ENCODE measurements at regions of chr11 and their contacts with region 1.

Region 1: DNA sequence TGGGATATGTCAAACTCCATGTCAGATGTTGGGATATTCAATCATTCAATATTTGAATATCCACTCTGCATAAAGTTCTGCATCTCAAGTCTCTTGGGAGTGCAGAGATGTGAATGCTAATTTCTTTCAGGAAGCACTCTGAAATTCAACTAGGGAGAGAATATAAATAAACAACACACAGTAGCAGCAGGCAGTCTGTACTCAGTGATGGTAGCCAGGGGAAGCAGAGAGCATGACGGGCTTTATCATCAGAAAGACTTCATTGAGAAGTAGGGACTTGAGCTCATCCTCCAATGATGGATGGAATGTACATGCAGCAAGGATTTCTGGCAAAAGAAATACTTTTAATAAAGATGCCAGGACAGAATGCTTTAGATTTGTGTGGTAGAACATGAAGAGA is 9.8 kb upstream of the TEAD1 start:
- DNase-seq: no peak
- H3K4me3 ChIP-seq: no peak overlapping the region
- H3K4me3 Mint-ChIP-seq: no peak overlapping the region
- H3K27ac Mint-ChIP-seq: no peak overlapping the region
- H3K4me1 ChIP-seq: no peaks in the 10 kb centered on the region
- H3K4me1 Mint-ChIP-seq: no peaks in the 10 kb centered on the region
- H3K27me3 ChIP-seq: no peaks in the 10 kb centered on the region
- H3K27me3 Mint-ChIP-seq: peaks cover 8% of the 10 kb centered on the region
- CTCF ChIP-seq: no peak

Region 2: DNA sequence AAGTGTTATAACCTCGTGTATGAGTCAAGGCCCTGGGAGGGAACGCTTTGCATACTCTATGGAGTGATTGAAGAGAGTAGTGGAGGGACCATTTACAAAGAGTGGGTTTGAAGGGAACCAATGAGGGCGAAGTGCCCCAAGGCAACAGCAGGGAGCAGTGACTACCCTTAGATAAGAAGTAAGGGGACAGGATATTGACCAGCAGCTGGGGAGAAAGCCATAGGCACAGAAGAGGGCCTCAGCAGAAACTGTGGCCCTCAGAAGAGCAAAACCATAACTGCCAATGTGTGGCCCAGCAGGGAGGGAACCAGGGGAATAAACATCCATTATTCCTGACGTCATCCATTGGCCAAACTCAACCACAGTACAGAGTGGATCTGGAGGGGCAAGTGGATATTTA is 262.4 kb before region 1 on chr11:
- CTCF ChIA-PET with region 1: interaction called, 12 read pairs
- POLR2A ChIA-PET with region 1: no interaction called
- intact Hi-C with region 1: no loop called
- DNase-seq: no peak
- H3K4me3 ChIP-seq: no peak overlapping the region
- H3K4me3 Mint-ChIP-seq: no peak overlapping the region
- H3K27ac Mint-ChIP-seq: no peak overlapping the region
- H3K4me1 ChIP-seq: peaks cover 25% of the 10 kb centered on the region
- H3K4me1 Mint-ChIP-seq: peaks cover 18% of the 10 kb centered on the region
- H3K27me3 ChIP-seq: no peaks in the 10 kb centered on the region
- H3K27me3 Mint-ChIP-seq: no peaks in the 10 kb centered on the region
- CTCF ChIP-seq: no peak